ENCODE measurements at regions of chr19 and their contacts with region 1.

Region 1: DNA sequence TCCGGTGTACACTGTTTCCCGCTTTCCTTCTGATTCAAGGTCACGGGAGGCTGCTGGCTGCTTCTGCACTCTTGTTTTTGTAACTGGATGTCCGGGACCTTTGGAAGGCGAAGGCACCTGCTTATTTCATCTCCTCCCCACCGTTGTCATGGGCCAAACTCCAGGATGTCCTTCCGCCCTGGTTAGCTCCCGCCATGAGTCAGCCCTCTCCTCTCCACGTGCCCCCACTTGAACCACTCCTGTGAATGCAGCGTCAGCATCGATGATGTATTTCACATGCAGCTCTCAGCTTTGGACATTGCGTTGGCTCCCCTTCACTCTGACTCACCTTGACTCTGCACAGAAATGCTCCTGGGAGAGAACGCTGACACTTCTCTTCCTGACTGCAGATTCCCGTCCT is 5.5 kb upstream of the GALP start:
- DNase-seq: peak; percentile 39
- ATAC-seq: no peak
- H3K4me3 ChIP-seq: no peak overlapping the region
- H3K27ac ChIP-seq: no peak overlapping the region
- H3K4me1 ChIP-seq: no peaks in the 10 kb centered on the region
- H3K27me3 ChIP-seq: no peaks in the 10 kb centered on the region
- CTCF ChIP-seq: no peak

Region 2: GRCh38 chr19:56080669-56081401 is 89.4 kb before region 1 on chr19:
- CTCF ChIA-PET with region 1: interaction called, 4 read pairs
- POLR2A ChIA-PET with region 1: interaction called, 5 read pairs
- in situ Hi-C with region 1: no loop called
- intact Hi-C with region 1: loop called (anchors 2 kb)
- DNase-seq: no peak
- ATAC-seq: peak; percentile 64
- H3K4me3 ChIP-seq: peak overlapping the region; percentile 32 to 64
- H3K27ac ChIP-seq: peak overlapping the region; percentile 62
- H3K4me1 ChIP-seq: peaks cover 11% of the 10 kb centered on the region
- H3K27me3 ChIP-seq: no peaks in the 10 kb centered on the region
- CTCF ChIP-seq: peak; percentile 78; the same call in 1 of the 2 replicates

Region 3: DNA sequence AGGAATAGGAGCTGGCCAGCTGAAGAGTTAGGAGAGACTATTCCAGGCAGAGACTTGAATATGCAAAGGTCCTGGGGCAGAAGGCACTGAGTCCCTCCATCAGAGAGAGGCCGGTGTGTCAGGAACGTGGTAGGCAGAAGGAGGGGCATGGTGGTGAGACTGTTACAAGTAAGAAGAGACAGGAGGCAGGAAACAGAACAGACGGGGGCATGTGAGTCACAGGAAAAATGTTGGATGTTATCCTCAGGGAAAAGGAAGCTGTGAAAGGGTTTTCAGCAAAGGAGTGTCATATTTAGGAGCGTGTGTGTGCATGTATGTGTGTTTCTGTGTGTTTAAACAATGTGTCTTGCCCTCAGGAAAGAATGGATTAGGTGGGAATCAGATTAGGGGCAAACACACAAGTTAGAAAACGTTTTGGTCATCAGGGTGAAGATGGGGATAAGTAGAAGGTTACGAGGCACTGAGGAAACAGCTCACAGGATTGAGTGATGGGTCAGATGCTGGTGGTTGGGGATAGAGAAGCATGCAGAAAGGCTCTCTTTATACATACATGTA is 103.4 kb after region 1 on chr19:
- CTCF ChIA-PET with region 1: no interaction called
- POLR2A ChIA-PET with region 1: no interaction called
- in situ Hi-C with region 1: no loop called
- intact Hi-C with region 1: no loop called
- DNase-seq: no peak
- ATAC-seq: peak; percentile 26; the same call in 1 of the 2 replicates
- H3K4me3 ChIP-seq: no peak overlapping the region
- H3K27ac ChIP-seq: no peak overlapping the region
- H3K4me1 ChIP-seq: no peaks in the 10 kb centered on the region
- H3K27me3 ChIP-seq: no peaks in the 10 kb centered on the region
- CTCF ChIP-seq: no peak

Measured in Panc1 (cell line).